ENCODE measurements at regions of chr11 and their contacts with region 1.

Region 1: GRCh38 chr11:62726915-62727763 is at the start of gene HNRNPUL2:
- DNase-seq: peak; percentile 98
- CTCF ChIP-seq: no peak

Region 2: DNA sequence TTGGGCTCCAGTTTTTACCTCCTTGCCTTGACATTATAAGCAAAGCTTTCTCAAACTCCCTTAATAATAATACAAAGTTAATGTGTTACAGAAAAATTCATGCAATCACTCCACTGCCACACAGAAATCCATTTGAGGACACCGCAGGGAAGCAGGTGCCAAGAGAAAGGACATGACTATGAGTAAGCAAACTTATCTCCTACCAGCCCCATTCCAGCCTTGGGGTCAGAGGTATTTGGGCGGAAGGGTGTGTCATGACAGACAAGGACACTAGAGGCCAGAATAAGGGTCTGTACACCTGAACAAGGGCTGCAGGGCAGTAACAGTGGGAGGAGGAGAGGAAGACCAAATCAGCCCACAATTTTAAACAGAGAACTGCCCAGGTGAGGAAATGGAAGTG is 13.8 kb before region 1 on chr11:
- CTCF ChIA-PET with region 1: interaction called, 10 read pairs
- POLR2A ChIA-PET with region 1: interaction called, 7 read pairs
- DNase-seq: no peak
- CTCF ChIP-seq: no peak

Region 3: GRCh38 chr11:62753736-62754603 is 26.8 kb after region 1 on chr11 and contains the start of gene ZBTB3:
- CTCF ChIA-PET with region 1: interaction called, 10 read pairs
- POLR2A ChIA-PET with region 1: interaction called, 19 read pairs
- DNase-seq: peak; percentile 96
- CTCF ChIP-seq: no peak

Region 4: GRCh38 chr11:62771144-62772021 is 44.2 kb after region 1 on chr11 and contains the start of gene TAF6L:
- CTCF ChIA-PET with region 1: interaction called, 16 read pairs
- POLR2A ChIA-PET with region 1: interaction called, 3 read pairs
- DNase-seq: peak; percentile 93
- CTCF ChIP-seq: no peak

Region 5: GRCh38 chr11:62980133-62980760 is 253.1 kb after region 1 on chr11:
- CTCF ChIA-PET with region 1: no interaction called
- POLR2A ChIA-PET with region 1: no interaction called
- DNase-seq: no peak
- CTCF ChIP-seq: no peak

Measured in GM10248 (cell line).